Dorsolateral prefrontal cortex (tissue), 120 donors: ENCODE measurements at regions of chr4 and their contacts with region 1.

Region 1: DNA sequence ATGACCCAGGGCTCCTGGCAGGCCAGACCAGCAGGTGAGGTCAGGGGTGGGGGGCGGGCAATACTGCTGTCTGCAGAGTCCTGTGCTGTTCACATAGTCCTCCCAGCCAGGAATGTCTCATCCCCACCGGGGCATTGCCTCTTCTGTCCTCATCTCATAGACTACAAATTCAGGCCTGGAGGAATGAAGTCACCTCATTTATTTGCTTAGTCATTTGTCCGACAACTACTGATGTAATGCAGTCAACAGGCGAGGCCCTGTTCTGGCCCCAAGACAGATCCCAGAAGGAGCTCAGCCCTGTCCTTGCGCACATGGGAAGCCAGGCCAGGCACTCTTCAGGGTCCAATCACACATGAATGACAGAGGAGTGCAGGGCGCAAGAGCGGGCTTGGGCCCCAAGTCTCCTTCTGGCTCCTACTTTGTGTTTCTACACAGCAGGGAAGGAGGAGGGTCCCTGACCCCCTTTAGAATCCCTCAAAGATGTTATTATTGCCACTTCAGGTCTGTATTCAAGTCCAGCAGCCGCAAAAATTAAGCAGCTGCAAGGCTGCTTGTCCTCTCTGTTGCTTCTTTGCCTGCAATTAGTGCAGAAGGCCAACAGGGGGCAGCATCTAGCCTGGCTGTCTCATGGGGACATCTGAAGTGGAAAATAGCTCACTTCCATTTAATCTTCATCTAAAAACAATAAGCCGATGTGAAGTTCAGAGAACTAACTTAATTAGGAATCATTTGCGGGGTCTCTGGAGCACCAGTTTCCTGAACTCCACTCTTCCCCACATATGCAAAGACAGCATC is 15.2 kb upstream of the HMX1 start:
- DNase-seq: no peak
- H3K4me3 ChIP-seq: no peak overlapping the region
- H3K27ac ChIP-seq: no peak overlapping the region
- H3K27me3 ChIP-seq: peaks cover 3 to 57% (median 44%) of the 10 kb centered on the region in 45 donors
- CTCF ChIP-seq: peak in 3 of 56 donors; percentile 9 to 35 (median 22)

Region 2: DNA sequence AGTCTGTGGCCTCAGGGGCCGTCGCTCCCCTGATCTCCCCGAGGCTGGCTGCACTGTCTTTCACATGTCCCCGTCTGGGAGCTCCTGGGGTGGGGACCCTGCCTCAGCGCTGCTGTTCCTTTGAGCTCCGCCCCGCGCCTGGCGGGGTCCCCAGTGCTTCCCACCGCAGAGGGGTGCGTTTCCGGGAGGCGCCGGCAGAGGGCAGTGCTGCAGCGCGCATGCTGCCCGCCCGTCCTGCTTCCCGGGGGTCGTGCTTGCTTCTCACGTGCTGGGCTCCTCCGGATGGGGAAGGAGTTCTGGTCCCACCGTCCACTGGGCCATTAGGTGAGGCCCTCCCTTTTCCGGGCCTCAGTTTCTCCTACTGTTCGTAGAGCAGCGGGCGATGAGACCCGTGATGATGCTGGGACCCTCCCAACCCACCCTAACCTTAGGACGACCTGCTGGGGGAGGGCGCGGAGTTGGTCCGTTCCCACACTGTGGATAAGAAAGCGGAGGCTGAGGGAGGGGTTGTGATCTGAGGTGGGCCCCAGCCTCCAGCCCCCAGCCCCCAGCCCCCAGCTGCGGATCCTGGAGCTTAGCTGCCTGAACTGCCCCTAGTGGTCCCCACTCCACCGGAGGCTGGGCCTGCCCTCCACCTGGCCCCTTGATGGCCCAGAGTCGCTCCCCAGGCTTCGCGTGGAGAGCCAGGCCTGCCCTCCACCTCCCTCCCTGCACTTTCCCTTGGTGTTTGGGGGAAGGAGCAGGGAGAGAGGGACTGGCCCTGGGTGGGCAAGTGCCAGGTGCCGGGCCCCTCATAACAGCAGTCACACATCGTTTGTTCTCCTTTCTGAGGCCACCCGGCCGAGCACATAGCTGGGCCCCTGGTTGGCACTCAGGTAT is 279.0 kb before region 1 on chr4:
- intact Hi-C with region 1: loop called in 1 of 2 experiments (anchors 10 kb)
- DNase-seq: peak in 3 of 10 donors; percentile 9 to 62 (median 19)
- H3K4me3 ChIP-seq: peak overlapping the region in 4 of 59 donors; percentile 8 to 31 (median 8)
- H3K27ac ChIP-seq: no peak overlapping the region
- H3K27me3 ChIP-seq: peaks cover 0 to 21% (median 3%) of the 10 kb centered on the region in 45 donors
- CTCF ChIP-seq: peak; percentile 68 to 99 (median 94)

Region 3: DNA sequence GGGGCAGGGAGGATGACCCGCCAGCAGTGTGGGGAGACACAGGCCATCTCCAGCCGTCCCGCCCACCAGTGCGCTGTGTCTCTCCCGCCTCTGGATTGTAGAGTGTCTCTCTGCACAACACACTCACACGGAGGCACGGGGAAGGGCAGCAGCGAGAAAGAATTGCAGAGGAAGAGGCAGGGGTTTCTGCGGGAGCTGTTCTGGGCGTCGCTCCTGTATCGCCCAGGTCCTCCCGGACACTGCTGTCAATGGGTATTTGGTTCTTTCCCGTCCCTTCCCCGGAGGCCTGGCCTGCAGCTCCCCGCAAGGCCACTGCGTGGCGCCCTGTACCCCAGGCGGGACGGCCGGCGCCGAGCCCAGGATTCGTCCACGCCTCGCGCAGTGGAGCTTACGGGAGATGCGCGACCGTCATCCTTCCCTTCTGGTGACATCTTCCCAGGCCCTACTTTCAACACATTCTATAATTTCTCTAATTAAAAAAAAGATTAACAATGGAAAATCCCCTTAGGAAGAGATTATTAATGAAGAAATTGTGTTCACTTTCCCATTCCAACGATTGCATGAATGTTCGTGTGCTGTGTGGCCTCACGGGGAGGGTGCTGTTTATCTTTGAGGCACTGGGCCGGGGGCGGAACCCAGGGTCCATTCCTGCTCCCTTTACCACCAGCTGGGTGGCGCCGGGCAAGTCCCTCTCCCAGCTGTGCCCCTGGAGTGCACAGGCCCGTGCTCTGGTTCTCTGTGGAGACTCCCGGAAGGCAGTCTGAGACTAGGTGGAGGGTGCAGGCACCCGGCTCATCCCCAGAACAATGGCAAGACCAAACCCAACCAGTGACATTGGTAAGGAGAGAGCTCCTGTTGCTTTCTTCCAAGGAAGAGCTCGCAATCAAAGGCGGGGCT is 198.5 kb before region 1 on chr4:
- intact Hi-C with region 1: loop called (anchors 2 to 5 kb)
- DNase-seq: peak in 5 of 10 donors; percentile 17 to 69 (median 38)
- H3K4me3 ChIP-seq: peak overlapping the region in 1 of 59 donors; percentile 17
- H3K27ac ChIP-seq: no peak overlapping the region
- H3K27me3 ChIP-seq: peaks cover 0 to 36% (median 14%) of the 10 kb centered on the region in 45 donors
- CTCF ChIP-seq: peak in 54 of 56 donors; percentile 40 to 80 (median 62)

Region 4: GRCh38 chr4:8795774-8796495 is 90.9 kb before region 1 on chr4:
- intact Hi-C with region 1: no loop called
- DNase-seq: no peak
- H3K4me3 ChIP-seq: no peak overlapping the region
- H3K27ac ChIP-seq: no peak overlapping the region
- H3K27me3 ChIP-seq: peaks cover 0 to 27% (median 4%) of the 10 kb centered on the region in 45 donors
- CTCF ChIP-seq: no peak